Activated CD4-positive, alpha-beta memory T cell treated with anti-CD3 and anti-CD28 coated beads for 36 hours (primary cell): ENCODE measurements at regions of chr14 and their contacts with region 1.

Region 1: GRCh38 chr14:52021957-52022600 is 32.7 kb downstream of the RTRAF start:
- DNase-seq: no peak
- H3K4me3 Mint-ChIP-seq: no peak overlapping the region
- H3K27ac Mint-ChIP-seq: no peak overlapping the region
- H3K4me1 Mint-ChIP-seq: peaks cover 18% of the 10 kb centered on the region
- H3K27me3 Mint-ChIP-seq: no peaks in the 10 kb centered on the region

Region 2: DNA sequence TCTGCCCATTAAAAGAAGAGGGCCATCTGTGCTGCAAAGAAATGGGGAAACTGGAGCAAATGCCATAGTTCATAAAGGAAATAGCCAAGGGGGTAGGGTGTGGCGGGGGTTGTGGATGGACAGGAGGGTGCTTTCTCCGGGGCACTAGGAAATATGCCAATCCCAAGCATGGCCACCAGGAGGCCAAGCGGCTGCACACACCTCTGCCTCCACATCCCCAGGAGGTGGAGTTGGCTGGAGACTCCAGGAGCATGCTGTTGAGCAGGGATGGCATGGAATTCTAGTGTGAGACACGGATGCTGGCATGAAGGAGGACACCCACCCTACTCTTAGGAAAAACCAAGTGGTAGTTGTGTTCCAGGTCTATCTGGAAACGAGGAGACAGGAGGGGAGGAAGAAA is 21.6 kb after region 1 on chr14:
- CTCF ChIA-PET with region 1: interaction called, 10 read pairs
- POLR2A ChIA-PET with region 1: no interaction called
- intact Hi-C with region 1: no loop called
- DNase-seq: peak; percentile 57
- H3K4me3 Mint-ChIP-seq: no peak overlapping the region
- H3K27ac Mint-ChIP-seq: no peak overlapping the region
- H3K4me1 Mint-ChIP-seq: peaks cover 14% of the 10 kb centered on the region
- H3K27me3 Mint-ChIP-seq: peaks cover 3% of the 10 kb centered on the region

Region 3: DNA sequence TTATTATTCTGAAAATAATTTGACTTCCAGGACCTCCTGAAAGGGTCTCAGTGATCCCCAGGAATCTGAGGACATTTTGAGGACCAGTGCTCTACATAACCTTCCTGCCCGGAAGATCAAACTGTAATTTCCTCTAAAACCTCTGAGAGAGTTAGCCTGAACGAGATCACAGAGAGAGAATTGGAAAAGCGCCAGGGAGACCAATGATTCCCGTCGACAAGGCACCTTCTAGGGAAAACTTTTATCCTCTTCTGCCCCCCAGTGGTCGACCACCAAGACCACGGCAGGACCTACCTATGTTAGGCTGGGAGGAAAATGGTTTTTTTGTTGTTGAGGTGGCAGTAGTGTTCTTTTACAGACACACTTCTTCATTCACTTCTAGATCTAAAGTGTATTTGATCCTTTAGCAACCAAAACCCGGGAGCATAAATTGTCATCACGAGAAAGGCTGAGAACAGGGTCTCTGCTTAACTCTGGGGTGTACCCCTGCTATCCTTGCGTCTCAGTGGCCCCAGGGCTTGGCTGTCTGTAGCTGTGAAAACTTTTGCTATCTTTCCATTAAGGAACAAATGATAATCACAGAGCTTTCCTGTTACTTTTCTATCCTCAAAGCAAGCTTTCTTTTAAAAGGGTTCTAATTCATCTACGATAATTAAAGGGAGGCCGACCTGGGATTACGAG is 109.7 kb after region 1 on chr14:
- CTCF ChIA-PET with region 1: no interaction called
- POLR2A ChIA-PET with region 1: no interaction called
- intact Hi-C with region 1: loop called (anchors 10 kb)
- DNase-seq: peak; percentile 53
- H3K4me3 Mint-ChIP-seq: no peak overlapping the region
- H3K27ac Mint-ChIP-seq: no peak overlapping the region
- H3K4me1 Mint-ChIP-seq: peaks cover 6% of the 10 kb centered on the region
- H3K27me3 Mint-ChIP-seq: peaks cover 3% of the 10 kb centered on the region

Region 4: GRCh38 chr14:52189330-52189729 is 167.3 kb after region 1 on chr14:
- CTCF ChIA-PET with region 1: no interaction called
- POLR2A ChIA-PET with region 1: no interaction called
- intact Hi-C with region 1: loop called (anchors 5 kb)
- DNase-seq: no peak
- H3K4me3 Mint-ChIP-seq: no peak overlapping the region
- H3K27ac Mint-ChIP-seq: no peak overlapping the region
- H3K4me1 Mint-ChIP-seq: peaks cover 13% of the 10 kb centered on the region
- H3K27me3 Mint-ChIP-seq: no peaks in the 10 kb centered on the region